ENCODE measurements at regions of chr1 and their contacts with region 1.

Region 1: GRCh38 chr1:108897865-108898720 is 21.3 kb downstream of the GPSM2 start:
- ATAC-seq: peak; percentile 52 to 72 (median 62)
- H3K4me3 ChIP-seq: no peak overlapping the region
- H3K27ac ChIP-seq: no peak overlapping the region
- H3K4me1 ChIP-seq: peaks cover 0 to 13% of the 10 kb centered on the region in 2 donors

Region 2: DNA sequence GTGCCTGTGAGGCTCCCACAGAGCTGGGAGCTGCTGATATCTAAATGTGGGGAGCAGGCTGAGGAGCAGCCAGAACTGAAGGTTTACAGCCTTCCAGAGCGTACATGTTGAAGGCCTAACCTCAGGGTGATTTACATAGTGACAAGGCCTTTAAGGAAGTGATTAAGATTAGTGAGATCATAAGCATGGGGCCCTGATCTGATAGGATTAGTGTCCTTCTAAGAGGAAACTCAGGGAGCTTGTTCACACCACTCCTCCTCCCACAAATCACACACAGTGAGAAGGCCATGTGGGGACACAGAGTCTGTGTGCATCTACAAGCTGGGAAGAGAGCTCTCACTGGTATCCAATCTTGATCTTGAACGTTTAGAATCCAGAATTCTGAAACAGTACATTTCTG is 540.3 kb before region 1 on chr1:
- in situ Hi-C with region 1: no loop called
- ATAC-seq: no peak
- H3K4me3 ChIP-seq: no peak overlapping the region
- H3K27ac ChIP-seq: no peak overlapping the region
- H3K4me1 ChIP-seq: no peaks in the 10 kb centered on the region

Region 3: DNA sequence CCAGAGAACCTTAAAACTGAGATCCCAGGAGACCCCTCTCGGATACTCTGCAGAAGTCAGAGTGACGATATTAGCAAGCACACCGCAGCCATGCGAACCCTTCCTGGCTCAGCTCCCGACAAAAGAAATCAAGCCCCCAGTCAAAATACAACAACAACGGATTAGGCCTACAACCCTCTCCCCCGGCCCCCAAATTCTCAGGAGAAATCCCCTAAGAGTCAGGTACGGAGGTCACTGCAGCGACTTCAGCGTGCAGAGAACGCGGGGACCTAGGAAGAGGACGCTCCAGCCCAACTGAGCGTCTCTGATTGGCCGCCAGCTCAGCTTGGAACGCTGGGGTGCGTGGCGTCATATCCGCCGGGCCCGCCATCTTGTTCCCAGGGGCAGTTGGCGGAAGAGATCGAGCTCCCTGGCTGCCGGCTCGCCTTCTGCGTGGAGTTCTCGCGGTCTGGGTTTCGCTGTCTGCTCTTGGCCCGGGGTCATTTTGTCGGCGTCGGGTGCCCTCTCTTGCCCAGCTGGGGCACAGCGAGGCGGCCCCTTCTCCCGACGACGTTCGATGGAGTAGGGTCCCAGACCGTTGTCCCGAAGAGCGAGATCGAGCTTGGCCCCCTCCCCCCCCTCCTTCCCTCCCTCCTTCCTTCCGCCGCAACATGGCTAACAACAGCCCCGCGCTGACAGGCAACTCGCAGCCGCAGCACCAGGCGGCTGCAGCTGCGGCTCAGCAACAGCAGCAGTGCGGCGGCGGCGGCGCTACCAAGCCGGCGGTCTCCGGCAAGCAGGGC is 206.0 kb before region 1 on chr1 and contains the start of gene PRPF38B:
- in situ Hi-C with region 1: loop called in 1 of 9 experiments (anchors 25 kb)
- ATAC-seq: peak; percentile 92 to 97 (median 96)
- H3K4me3 ChIP-seq: peak within 1 kb of the TSS; percentile 77 to 99 (median 94)
- H3K27ac ChIP-seq: peak within 1 kb of the TSS; percentile 97 to 98
- H3K4me1 ChIP-seq: peaks cover 3 to 23% of the 10 kb centered on the region in 2 donors
- total RNA-seq, gene PRPF38B: 22.0 to 61.4 (median 30.1) TPM